AG04449 (cell line): ENCODE measurements at regions of chr11 and their contacts with region 1.

Region 1: GRCh38 chr11:122202951-122203456 is 87.0 kb upstream of the BLID start:
- DNase-seq: no peak
- H3K4me3 ChIP-seq: peak overlapping the region; percentile 71
- CTCF ChIP-seq: peak; percentile 97

Region 2: DNA sequence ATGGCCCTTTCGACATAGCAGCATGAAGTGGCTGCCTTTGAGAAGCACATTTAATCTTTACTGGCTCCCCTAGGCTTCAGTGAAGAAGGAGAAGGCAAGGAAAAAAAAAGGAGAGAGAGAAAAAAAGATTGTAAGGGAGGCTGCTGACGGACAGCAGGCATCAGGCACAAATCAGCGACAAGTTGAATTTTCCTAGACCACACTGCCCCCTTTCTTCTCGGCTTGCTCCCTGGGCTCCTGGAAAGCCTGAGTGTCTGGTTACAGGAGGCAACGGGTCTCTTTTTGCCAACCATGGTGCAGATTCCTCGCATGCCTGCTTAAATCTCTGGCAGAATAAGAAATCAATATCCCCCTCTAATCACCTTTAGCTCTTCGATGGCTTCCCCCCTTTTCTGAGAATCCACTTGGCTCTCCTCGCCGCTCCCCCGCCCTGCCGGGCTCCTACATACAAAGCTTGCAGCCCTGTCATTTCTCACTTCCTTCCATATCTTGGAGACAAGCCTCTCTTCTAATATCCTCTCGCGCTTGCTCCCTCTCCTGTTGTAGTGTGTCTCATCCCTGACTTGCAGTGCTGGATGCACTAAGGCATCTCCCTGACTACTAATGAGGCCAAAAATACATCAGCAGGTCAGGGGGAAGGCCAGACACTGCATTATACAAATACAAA is 101.2 kb before region 1 on chr11:
- CTCF ChIA-PET with region 1: interaction called, 47 read pairs
- POLR2A ChIA-PET with region 1: interaction called, 21 read pairs
- DNase-seq: no peak
- H3K4me3 ChIP-seq: peak overlapping the region; percentile 82
- CTCF ChIP-seq: peak; percentile 72

Region 3: DNA sequence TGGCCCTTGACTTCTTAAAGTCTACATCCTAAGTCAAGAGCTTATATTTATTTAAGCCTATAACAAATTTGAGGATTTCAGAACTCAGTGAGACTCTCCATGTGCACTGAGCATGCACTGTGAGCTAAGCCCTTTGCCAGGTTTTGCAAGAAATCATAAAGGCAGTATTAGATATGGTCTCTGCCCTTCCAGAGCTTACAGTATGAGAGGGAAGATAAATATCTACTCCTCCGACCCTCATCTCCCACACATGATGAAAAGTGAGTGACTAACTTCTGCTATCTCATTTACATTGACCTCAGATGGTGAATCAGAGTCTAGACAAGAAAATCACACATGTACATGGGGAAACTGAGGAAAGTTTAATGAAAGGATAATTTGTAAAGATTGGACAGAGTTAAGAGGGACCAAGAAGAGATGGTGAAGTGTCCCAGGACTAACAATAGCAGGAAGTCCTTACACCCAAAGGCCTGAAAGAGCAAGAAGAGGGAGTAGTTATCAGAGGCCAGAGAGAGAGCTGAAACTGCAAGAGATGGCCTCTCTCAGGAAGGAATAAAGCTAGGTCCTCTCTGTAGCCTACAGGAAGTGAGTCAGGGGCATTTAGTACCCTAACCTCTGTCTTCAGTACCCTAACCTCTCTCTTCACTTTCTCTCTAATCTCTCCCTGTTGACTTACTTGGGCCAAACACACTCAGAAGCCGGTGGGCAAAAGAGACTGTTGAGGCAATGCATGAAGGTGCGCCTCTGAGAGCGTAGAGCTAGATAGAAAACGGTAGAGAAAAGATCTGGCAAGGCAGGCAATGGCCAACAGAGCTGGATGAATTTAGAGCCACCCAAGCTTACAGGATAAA is 64.0 kb before region 1 on chr11:
- CTCF ChIA-PET with region 1: interaction called, 11 read pairs
- POLR2A ChIA-PET with region 1: no interaction called
- DNase-seq: no peak
- H3K4me3 ChIP-seq: no peak overlapping the region
- CTCF ChIP-seq: no peak

Region 4: GRCh38 chr11:122173587-122173986 is 29.4 kb before region 1 on chr11:
- CTCF ChIA-PET with region 1: interaction called, 30 read pairs
- POLR2A ChIA-PET with region 1: interaction called, 24 read pairs
- DNase-seq: no peak
- H3K4me3 ChIP-seq: no peak overlapping the region
- CTCF ChIP-seq: no peak

Region 5: DNA sequence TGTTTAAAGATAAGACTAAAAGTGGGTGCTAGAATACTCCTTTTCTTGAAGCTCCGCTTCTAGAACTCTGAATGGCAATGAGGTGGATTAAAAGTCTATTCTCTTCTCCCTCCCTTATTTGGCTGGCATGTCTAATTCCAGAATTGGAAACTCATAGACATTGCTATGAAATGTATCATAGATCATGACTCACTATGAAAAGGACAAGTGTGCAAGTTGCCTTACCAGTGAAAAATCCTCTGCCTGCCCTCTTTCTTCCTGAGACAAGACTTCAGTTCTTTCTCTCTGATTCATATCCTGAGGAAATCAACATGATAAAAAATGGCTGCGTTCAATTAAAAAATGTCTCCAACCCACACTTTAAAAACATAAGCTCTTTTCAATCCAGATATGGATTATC is 13.8 kb before region 1 on chr11:
- CTCF ChIA-PET with region 1: interaction called, 22 read pairs
- POLR2A ChIA-PET with region 1: interaction called, 11 read pairs
- DNase-seq: peak; percentile 96
- H3K4me3 ChIP-seq: no peak overlapping the region
- CTCF ChIP-seq: no peak

Region 6: GRCh38 chr11:122365610-122366360 is 162.8 kb after region 1 on chr11:
- CTCF ChIA-PET with region 1: no interaction called
- POLR2A ChIA-PET with region 1: no interaction called
- DNase-seq: no peak
- H3K4me3 ChIP-seq: no peak overlapping the region
- CTCF ChIP-seq: no peak

Region 7: DNA sequence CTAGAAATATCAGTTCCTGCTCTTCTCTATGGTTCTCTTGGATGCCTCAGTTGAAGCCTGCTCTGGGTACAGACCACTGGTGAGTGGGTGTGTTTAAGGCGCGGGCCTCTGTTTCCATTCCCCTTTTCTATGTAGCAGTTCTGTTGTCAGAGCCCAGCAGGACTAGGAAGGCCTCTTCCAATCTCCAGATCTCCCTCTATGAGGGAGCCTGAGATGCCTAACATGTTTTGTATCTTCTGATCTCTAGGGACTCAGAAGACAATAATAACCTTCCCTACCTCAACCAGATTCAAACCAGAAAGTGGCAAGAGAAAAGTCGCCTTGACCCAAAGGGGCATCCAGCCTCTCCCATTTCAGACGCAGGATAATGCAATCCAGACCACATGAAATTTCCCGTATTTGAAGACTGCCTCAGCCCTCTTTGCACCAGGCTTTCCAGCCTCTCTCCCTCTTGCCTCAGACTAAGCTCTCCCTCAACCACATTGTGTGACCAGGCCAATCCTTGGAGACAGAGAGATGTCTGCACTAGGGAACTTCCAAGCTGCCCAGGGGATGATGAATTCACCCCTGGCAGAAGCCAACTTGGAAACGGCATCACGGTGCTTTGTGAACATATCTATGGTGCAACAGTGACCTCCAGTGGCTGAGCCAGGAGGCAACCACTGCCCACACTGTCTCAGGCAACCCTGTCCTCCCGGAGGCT is 302.5 kb after region 1 on chr11:
- CTCF ChIA-PET with region 1: interaction called, 10 read pairs
- POLR2A ChIA-PET with region 1: interaction called, 4 read pairs
- DNase-seq: peak; percentile 91
- H3K4me3 ChIP-seq: no peak overlapping the region
- CTCF ChIP-seq: peak; percentile 86